ENCODE measurements at regions of chr7 and their contacts with region 1.

Region 1: DNA sequence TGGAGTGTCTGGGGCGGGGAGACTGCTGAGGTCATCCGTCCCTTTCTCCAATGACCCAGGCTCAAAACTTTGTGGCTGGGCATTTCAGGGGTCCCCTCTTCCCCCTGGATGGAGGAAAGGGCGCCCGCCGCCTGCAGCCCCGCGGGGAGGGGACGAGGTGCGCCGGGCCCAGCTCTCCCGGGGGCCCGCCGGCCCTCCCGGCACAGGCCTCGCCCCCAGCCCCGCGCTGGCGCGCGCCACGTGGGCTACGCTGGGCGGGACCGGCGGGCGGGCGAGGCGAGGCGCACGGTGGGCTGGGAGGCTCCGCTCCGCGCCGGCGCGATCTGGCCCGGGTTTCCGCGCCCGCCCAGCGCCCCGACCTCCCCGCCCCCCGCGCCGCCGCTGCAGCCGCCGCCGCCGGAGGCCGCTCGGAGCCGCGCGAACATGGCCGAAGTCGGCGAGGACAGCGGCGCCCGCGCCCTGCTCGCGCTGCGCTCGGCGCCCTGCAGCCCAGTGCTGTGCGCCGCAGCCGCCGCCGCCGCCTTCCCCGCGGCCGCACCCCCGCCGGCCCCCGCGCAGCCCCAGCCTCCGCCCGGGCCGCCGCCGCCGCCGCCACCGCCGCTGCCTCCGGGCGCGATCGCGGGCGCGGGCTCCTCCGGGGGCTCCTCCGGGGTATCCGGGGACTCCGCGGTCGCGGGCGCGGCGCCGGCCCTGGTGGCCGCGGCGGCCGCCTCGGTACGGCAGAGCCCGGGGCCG is at the start of gene FOXK1:
- DNase-seq: peak; percentile 95
- H3K4me3 Mint-ChIP-seq: peak within 1 kb of the TSS; percentile 91
- H3K27ac Mint-ChIP-seq: peak within 1 kb of the TSS; percentile 94
- H3K4me1 Mint-ChIP-seq: peaks cover 27% of the 10 kb centered on the region
- H3K27me3 Mint-ChIP-seq: no peaks in the 10 kb centered on the region
- total RNA-seq, gene FOXK1: 36.6 TPM in 2 replicates

Region 2: GRCh38 chr7:4436361-4436895 is 245.6 kb before region 1 on chr7:
- intact Hi-C with region 1: no loop called
- DNase-seq: no peak
- H3K4me3 Mint-ChIP-seq: no peak overlapping the region
- H3K27ac Mint-ChIP-seq: no peak overlapping the region
- H3K4me1 Mint-ChIP-seq: no peaks in the 10 kb centered on the region
- H3K27me3 Mint-ChIP-seq: no peaks in the 10 kb centered on the region

Region 3: DNA sequence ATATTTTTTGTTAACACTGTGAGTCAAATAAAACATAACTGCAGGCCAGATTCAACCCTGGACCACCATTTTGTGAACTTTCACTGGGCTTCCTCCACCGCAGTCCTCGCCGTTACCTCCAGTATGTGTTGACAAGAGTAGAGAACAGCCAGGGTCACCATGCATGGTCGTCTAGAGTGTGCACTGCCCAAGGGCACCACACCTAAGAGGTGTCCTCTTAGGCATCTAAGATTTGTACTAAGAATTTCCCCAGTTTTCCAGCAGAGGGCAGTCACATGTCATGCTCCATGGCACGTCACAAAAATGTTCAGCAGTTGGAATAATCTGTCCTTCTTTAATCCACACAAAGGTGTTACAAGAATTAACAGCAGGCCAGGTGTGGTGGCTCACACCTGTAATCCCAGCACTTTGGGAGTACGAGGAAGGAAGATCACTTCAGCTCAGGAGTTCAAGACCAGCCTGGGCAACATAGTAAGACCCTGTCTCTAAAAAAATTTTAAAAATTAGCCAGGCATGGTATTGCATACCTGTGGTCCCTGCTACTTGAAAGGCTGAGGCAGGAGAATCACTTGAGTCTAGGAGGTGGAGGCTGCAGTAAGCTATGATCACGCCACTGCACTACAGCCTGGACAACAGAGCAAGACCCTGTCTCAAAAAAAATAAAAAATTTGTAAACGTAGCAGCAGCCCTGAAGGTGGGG is 71.1 kb before region 1 on chr7:
- intact Hi-C with region 1: loop called (anchors 2 kb)
- DNase-seq: peak; percentile 89
- H3K4me3 Mint-ChIP-seq: no peak overlapping the region
- H3K27ac Mint-ChIP-seq: no peak overlapping the region
- H3K4me1 Mint-ChIP-seq: peaks cover 10% of the 10 kb centered on the region
- H3K27me3 Mint-ChIP-seq: no peaks in the 10 kb centered on the region

Region 4: GRCh38 chr7:4641667-4642467 is 40.2 kb before region 1 on chr7:
- intact Hi-C with region 1: loop called (anchors 1 kb)
- DNase-seq: peak; percentile 99
- H3K4me3 Mint-ChIP-seq: peak overlapping the region; percentile 95
- H3K27ac Mint-ChIP-seq: peak overlapping the region; percentile 95
- H3K4me1 Mint-ChIP-seq: peaks cover 15% of the 10 kb centered on the region
- H3K27me3 Mint-ChIP-seq: no peaks in the 10 kb centered on the region

Region 5: DNA sequence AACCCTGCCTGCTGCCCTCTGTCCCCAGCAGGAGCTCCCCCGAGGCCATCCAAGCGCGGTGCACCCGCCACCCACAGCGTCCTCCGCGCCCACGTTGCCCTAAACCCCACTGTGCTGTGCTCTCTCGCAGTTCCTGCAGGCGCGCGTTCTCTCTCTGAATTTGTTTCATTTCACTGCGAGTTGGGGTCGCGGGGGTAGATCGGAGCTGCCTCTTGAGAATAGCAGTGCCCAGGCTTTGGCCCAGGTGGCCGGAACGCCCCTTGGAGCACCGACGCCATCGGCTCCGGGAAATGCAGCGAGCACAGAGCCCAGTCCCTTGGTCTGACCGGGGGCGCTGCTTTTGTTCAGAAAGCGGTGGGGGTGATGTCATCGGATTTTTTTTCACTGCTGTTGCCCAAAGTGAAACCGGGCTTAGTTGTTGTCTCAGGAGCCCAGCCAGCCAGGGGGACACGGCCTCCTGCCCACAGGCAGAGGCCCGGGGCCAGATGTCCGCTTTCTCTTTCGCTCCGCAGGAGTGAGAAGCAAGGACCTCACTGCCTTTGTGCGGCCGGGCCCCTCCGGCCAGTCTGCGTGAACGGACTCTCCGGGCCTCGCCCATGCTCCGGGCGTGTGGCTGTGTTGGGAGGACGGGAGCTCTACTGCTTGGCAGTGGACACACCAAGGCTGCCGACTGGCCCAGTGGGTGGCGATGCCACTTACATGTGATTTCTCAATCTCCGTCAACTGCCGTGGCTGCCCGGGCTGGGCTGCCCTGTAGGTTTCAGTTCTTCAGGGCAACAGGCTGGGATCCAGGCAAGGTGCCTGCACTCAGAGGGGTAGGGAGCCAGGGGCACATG is 43.2 kb after region 1 on chr7:
- intact Hi-C with region 1: loop called (anchors 2 kb)
- DNase-seq: peak; percentile 90
- H3K4me3 Mint-ChIP-seq: peak overlapping the region; percentile 82
- H3K27ac Mint-ChIP-seq: peak overlapping the region; percentile 93
- H3K4me1 Mint-ChIP-seq: peaks cover 29% of the 10 kb centered on the region
- H3K27me3 Mint-ChIP-seq: no peaks in the 10 kb centered on the region

Region 6: GRCh38 chr7:4744391-4745264 is 62.6 kb after region 1 on chr7:
- intact Hi-C with region 1: loop called (anchors 1 kb)
- DNase-seq: peak; percentile 95
- H3K4me3 Mint-ChIP-seq: peak overlapping the region; percentile 89
- H3K27ac Mint-ChIP-seq: peak overlapping the region; percentile 94
- H3K4me1 Mint-ChIP-seq: peaks cover 66% of the 10 kb centered on the region
- H3K27me3 Mint-ChIP-seq: no peaks in the 10 kb centered on the region

Region 7: DNA sequence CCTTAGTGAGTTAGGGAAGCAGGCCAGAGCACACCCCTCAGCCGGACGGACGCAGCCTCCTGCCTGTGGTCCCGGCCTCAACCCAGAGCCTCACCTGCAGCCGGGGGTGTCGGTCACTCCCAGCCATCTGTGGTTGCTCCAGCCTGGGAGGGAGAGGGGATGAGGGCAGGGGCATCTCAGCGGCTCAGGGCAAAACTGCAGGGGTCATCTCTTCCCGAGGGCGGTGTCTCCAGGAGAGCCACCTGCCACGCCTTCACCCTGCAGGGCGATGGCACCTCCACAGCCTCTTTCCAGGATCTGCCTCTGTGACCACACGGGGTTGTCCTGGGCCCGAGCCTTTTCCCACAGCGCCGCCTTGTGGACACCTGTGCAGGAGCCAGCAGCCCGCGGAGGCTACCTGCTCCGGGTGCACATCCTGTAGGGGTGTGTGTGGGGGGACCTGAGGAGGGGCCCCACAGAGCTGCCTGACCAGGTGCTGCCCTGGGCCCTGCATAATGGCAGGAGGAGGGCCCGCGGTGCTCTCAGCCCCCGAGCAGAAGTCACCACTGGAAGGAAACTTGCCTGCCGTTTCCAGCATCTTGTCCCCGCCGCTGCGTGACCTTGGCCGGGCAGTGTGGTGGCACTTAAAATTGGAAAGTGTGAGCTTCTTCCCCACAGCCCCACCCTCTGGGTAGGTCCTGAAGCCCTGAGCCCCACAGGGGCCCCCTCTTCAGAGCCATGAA is 71.8 kb after region 1 on chr7:
- intact Hi-C with region 1: loop called (anchors 2 kb)
- DNase-seq: peak; percentile 96
- H3K4me3 Mint-ChIP-seq: no peak overlapping the region
- H3K27ac Mint-ChIP-seq: no peak overlapping the region
- H3K4me1 Mint-ChIP-seq: peaks cover 11% of the 10 kb centered on the region
- H3K27me3 Mint-ChIP-seq: no peaks in the 10 kb centered on the region

Region 8: DNA sequence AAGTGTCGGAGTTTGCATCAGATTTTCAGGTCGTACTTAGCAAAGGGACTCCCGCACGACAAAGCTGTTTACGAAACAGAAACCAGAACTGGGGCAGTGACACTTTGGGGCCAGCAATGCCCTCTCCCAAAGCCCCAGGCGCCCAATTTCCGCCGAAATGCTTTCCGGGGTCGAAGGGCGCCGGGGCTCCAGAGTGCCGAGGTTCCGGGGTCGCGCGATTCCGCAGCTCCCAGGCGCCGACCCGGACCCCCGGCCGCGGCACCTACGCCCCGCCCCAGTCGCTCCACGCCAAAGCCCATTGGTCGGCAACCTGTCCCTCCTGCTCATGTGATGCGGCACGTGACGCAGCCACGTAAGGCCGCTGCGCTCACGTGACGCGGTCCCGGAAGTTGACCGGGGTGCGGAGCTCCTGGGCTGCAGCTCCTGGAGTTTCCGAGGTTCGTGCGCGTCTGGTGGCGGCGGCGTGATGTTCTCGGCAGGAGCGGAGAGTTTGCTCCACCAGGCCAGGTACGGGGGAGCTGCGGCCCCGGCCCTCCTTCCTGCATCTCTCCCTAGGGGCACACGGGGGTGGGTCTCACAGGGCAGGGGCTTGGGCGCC is 93.3 kb after region 1 on chr7 and contains the start of gene AP5Z1:
- intact Hi-C with region 1: loop called (anchors 1 kb)
- DNase-seq: peak; percentile 98
- H3K4me3 Mint-ChIP-seq: peak within 1 kb of the TSS; percentile 97
- H3K27ac Mint-ChIP-seq: peak within 1 kb of the TSS; percentile 97
- H3K4me1 Mint-ChIP-seq: peaks cover 36% of the 10 kb centered on the region
- H3K27me3 Mint-ChIP-seq: no peaks in the 10 kb centered on the region
- total RNA-seq, gene AP5Z1: 42.2 and 44.4 TPM in 2 replicates

Region 9: DNA sequence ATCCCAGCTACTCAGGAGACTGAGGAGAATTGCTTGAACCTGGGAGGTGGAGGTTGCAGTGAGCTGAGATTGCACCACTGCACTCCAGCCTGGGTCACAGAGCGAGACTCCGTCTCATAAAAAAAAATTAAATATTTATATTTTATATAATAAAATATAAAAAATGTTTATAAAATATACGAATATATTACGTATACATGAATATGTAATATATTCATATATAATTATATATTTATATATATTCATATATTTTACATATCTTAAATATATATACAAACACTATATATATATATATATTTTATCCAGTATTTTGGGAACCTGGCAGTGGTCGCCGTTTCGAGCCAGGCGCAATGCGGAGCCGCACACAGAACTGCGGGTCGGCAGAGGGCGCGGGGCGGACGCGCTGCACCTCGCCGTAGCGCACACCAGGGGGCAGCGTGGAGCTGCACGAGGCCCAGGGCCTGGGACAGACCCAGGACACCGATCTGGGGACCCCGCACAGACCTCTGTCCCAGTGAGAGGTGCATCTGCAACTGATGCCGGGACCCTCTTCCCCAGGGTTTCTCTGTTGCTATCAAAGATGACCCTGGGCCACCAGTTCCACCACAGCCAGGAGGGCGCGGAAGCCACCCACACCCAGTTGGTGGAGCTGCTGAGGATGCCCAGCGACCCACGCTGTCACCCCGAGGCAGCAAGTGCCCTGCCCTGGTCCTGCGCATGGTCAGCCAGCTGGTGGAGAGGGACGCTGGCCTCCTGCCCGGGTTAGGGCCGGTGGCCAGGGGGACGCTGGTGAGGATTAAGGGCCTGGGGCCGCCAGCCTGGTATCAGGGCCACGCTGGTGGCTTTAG is 116.0 kb after region 1 on chr7:
- intact Hi-C with region 1: no loop called
- DNase-seq: peak; percentile 91
- H3K4me3 Mint-ChIP-seq: no peak overlapping the region
- H3K27ac Mint-ChIP-seq: no peak overlapping the region
- H3K4me1 Mint-ChIP-seq: no peaks in the 10 kb centered on the region
- H3K27me3 Mint-ChIP-seq: no peaks in the 10 kb centered on the region

Measured in activated CD4-positive, alpha-beta T cell treated with anti-CD3 and anti-CD28 coated beads, Interleukin-2, amount 10 ng/mL, durations not matched to agents 24 days and 14 days (primary cell).